Right cardiac atrium (tissue), 5 donors: ENCODE measurements at regions of chr5 and their contacts with region 1.

Region 1: DNA sequence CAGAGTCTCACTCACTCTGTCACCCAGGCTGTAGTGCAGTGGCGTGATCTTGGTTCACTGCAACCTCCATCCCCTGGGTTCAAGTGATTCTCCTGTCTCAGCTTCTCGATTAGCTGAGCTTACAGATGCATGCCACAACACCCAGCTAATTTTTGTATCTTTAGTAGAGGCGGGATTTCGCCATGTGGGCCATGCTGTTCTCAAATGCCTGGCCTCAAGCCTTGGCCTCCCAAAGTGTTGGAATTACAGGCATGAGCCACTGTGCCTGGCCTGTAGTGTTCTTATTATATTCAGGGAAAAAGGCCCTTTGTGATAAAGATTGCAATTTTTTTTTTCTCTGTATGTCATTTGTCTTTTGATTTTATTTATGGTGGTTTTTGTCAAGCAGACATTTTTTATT is 24.0 kb upstream of the MCCC2 start:
- DNase-seq: no peak
- ATAC-seq: no peak
- H3K4me3 ChIP-seq: no peak overlapping the region
- H3K27ac ChIP-seq: no peak overlapping the region
- H3K4me1 ChIP-seq: no peaks in the 10 kb centered on the region
- H3K27me3 ChIP-seq: no peaks in the 10 kb centered on the region

Region 2: DNA sequence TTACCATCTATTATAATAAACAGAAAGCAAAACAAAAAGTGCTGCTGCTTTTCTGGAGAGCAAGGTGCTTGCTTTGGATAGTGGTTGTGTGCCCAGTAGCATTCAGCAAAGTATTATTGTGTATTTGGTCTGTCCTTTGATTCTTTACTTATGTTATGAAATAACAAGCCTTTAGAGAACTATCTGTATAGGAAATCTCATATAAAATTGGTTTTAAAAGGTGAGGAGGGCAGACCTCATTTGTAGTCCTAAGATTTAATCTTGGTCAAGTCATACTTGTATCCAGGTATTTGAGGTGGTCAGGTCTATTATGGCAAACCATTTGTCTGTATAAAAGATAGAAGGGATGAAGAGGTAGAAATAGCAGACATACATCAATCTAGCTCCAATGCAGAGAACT is 54.4 kb before region 1 on chr5:
- intact Hi-C with region 1: loop called in 1 of 4 experiments (anchors 10 kb)
- DNase-seq: no peak
- ATAC-seq: no peak
- H3K4me3 ChIP-seq: no peak overlapping the region
- H3K27ac ChIP-seq: no peak overlapping the region
- H3K4me1 ChIP-seq: no peaks in the 10 kb centered on the region
- H3K27me3 ChIP-seq: no peaks in the 10 kb centered on the region

Region 3: DNA sequence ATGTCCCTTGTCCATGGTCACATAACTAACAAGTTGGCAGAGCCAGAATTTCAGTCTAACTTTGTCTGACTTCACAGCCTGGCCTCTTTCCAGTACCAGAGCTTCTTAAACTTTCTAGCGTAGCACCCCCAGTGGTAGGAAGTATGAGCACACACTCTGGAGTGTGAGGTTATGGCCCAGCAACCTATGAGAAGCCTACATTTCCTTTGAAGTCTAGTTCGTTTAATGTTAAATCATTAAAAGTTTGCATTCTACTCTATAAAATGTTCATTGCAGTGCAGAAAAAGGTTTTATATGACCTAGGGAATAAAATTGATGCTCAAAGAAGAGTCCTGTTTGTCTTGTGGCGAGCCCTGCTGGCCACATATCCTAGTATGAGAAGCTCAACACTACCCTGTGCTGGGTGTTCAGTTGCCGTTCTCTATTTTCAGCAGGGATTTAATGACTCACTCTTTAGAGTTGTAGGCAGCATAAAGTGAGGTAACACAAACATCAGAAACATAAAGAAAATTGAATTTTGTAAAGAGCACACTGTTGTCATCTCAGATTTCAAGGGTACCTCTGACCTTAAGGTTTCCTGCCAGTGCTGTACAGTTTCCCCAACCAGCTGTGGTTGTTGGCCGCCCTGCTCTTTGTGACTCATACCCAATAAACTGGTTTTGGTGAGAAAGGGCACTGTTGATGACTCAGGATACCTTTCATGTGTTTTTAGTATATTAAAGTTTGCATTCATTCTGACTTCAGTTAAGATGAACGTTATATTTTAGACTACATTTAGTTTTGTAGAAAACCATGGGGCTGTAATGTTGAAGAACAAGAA is 38.3 kb after region 1 on chr5:
- intact Hi-C with region 1: no loop called
- DNase-seq: peak in 2 of 3 donors; percentile 57 to 63
- ATAC-seq: peak; percentile 88 to 90
- H3K4me3 ChIP-seq: no peak overlapping the region
- H3K27ac ChIP-seq: no peak overlapping the region
- H3K4me1 ChIP-seq: no peaks in the 10 kb centered on the region
- H3K27me3 ChIP-seq: no peaks in the 10 kb centered on the region

Region 4: GRCh38 chr5:71681296-71681695 is 118.1 kb after region 1 on chr5:
- intact Hi-C with region 1: no loop called
- DNase-seq: no peak
- ATAC-seq: no peak
- H3K4me3 ChIP-seq: no peak overlapping the region
- H3K27ac ChIP-seq: no peak overlapping the region
- H3K4me1 ChIP-seq: no peaks in the 10 kb centered on the region
- H3K27me3 ChIP-seq: no peaks in the 10 kb centered on the region